ENCODE measurements at regions of chr13 and their contacts with region 1.

Region 1: DNA sequence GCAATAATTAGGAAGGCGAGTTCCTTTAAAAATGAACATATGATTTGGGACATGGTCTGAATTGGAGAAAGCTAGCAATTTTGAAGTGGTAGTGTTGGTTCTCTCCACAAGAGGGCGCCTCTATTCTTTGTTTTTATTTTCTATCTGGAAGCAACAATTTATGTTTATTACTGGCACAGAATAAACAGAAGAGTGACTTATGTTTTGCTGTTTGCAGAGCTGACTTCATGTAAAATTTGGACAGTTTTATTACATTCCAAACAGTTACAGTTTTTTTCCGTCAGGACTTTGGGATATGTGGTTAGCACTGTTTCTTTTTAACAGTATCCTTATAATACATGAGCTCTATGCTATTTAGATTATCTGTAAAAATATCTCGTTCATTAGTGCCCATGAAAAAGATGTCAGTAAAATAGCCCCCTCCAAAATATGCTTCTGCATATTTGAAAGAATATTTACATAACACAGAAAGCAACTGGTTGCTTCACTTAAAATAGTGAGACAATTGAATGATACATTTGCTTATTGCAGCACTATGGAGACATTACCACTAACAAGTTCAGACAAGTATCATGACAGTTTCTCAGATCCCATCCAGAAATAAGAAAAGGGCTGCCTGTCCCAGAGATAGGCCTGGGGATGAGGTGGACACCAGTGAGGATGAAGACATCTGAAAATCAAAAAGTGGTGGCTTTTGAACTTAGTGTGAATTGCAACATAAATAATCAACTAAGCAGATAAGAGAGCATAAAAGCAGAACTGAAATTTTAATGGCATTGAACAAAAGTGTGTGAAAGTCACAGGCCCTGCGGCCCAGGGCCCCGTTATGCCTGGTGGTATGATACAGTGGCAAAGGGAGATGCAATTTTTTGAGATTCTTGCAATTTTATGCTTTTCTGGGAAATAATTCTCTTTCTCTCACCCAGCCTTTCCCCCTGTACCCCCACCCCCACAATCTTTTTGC is 32.3 kb upstream of the FGF9 start:
- DNase-seq: peak in 6 of 7 donors; percentile 14 to 64 (median 41)
- H3K4me3 ChIP-seq: no peak overlapping the region
- H3K27ac ChIP-seq: no peak overlapping the region
- H3K4me1 ChIP-seq: no peaks in the 10 kb centered on the region
- H3K27me3 ChIP-seq: no peaks in the 10 kb centered on the region
- CTCF ChIP-seq: peak; percentile 66 to 90 (median 78)
- POLR2A ChIP-seq: no peak

Region 2: DNA sequence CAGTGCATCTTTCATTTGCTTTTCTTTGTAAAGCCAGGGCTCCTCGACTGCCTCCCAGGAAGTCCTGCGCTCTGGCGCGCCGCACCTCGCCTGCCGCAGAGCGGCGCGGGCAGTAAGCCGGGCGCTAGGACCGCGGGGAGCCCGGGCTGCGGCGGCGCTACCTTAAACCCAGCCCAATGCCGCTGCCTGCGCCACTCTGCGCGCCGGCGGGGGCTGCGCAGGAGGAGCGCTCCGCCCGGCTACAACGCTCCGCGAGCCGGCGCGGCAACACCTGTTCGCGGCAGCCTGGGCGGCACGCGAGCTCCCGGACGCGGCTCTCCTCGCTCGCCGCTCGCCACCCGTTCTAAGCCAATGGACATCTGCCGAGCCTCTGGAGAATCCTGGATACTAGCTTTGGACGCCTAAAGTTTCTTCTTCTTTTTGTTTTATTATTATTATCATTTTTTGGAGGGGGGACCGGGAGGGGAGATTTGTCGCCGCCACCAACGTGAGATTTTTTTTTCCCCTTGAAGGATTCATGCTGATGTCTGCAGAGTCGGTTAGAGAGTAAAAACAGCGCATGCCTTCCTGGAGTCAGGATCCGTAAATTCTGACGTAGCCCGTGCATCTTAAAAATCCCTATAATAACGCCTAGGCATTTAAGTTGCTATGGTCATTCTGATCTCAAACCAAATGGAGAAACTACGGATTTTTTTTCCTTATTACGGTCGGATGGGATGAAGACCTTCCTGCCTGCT is 32.5 kb after region 1 on chr13 and contains the start of gene FGF9:
- intact Hi-C with region 1: no loop called
- DNase-seq: peak; percentile 74 to 85 (median 78)
- H3K4me3 ChIP-seq: peak within 1 kb of the TSS in 3 of 4 donors; percentile 31 to 94 (median 36)
- H3K27ac ChIP-seq: peak within 1 kb of the TSS; percentile 36 to 83 (median 52)
- H3K4me1 ChIP-seq: peaks cover 4 to 40% of the 10 kb centered on the region in 2 donors
- H3K27me3 ChIP-seq: no peaks in the 10 kb centered on the region
- CTCF ChIP-seq: peak in 2 of 6 experiments; percentile 31 to 43
- POLR2A ChIP-seq: peak; percentile 41 to 77
- total RNA-seq, gene FGF9: 1.4 to 20.3 (median 3.0) TPM

Region 3: GRCh38 chr13:22278336-22278929 is 639.8 kb after region 1 on chr13:
- intact Hi-C with region 1: loop called in 1 of 2 experiments (anchors 5 kb)
- DNase-seq: peak; percentile 56 to 83 (median 68)
- H3K4me3 ChIP-seq: no peak overlapping the region
- H3K27ac ChIP-seq: no peak overlapping the region
- H3K4me1 ChIP-seq: no peaks in the 10 kb centered on the region
- H3K27me3 ChIP-seq: no peaks in the 10 kb centered on the region
- CTCF ChIP-seq: peak; percentile 36 to 64 (median 54)
- POLR2A ChIP-seq: no peak

Region 4: GRCh38 chr13:22757530-22758120 is 1119.0 kb after region 1 on chr13:
- intact Hi-C with region 1: loop called (anchors 10 kb)
- DNase-seq: no peak
- H3K4me3 ChIP-seq: no peak overlapping the region
- H3K27ac ChIP-seq: no peak overlapping the region
- H3K4me1 ChIP-seq: no peaks in the 10 kb centered on the region
- H3K27me3 ChIP-seq: no peaks in the 10 kb centered on the region
- CTCF ChIP-seq: peak; percentile 27 to 72 (median 54)
- POLR2A ChIP-seq: no peak

Region 5: GRCh38 chr13:22793598-22794134 is 1155.1 kb after region 1 on chr13:
- intact Hi-C with region 1: loop called in 1 of 2 experiments (anchors 10 kb)
- DNase-seq: no peak
- H3K4me3 ChIP-seq: no peak overlapping the region
- H3K27ac ChIP-seq: no peak overlapping the region
- H3K4me1 ChIP-seq: no peaks in the 10 kb centered on the region
- H3K27me3 ChIP-seq: peaks cover 12% of the 10 kb centered on the region
- CTCF ChIP-seq: no peak
- POLR2A ChIP-seq: no peak

Measured in adrenal gland (tissue), 19 donors.